Dendritic cell treated with granulocyte-macrophage colony-stimulating factor and Interleukin-4, amounts not matched to agents 40 ng/mL and 50 ng/mL, for 4 days (primary cell): ENCODE measurements at regions of chr3 and their contacts with region 1.

Region 1: DNA sequence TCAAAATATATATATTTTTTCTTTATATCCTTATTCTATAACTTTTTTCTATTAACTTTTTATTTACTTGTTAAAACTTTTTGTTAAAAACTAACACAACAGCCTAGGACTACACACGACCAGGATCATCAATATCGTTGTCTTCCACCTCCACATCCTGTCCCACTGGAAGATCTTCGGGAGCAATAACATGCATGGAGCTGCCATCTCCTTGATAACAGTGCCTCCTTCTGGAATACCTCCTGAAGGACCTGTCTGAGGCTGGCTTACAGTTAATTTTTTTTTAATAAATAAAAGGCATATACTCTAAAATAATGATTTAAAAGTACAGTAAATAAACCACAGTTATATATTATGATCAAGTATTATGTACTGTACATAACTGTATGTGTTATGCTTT is 58.9 kb downstream of the SFMBT1 start:
- H3K4me3 Mint-ChIP-seq: no peak overlapping the region
- H3K27ac Mint-ChIP-seq: no peak overlapping the region
- H3K4me1 Mint-ChIP-seq: peaks cover 30% of the 10 kb centered on the region
- H3K27me3 Mint-ChIP-seq: no peaks in the 10 kb centered on the region

Region 2: DNA sequence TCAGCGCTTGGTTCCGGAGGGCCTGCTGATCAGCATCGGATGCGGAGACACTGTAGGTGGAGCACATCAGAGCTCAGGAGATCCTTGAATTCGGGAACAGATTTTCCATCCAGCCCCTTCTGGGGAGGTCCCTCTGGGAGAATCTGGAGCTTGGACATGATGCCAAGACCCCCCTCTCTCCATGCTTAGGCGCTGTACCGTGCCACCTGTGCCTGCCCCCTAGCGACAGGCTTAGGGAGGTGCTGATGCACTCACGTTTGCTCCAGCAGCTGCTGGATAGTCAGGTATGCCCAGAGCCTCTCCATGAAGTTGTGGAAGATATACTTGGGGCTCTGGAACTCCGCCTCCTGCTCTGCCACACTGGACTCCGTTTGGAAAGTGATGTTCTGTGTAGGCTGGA is 166.2 kb before region 1 on chr3:
- intact Hi-C with region 1: no loop called
- H3K4me3 Mint-ChIP-seq: no peak overlapping the region
- H3K27ac Mint-ChIP-seq: no peak overlapping the region
- H3K4me1 Mint-ChIP-seq: no peaks in the 10 kb centered on the region
- H3K27me3 Mint-ChIP-seq: no peaks in the 10 kb centered on the region

Region 3: DNA sequence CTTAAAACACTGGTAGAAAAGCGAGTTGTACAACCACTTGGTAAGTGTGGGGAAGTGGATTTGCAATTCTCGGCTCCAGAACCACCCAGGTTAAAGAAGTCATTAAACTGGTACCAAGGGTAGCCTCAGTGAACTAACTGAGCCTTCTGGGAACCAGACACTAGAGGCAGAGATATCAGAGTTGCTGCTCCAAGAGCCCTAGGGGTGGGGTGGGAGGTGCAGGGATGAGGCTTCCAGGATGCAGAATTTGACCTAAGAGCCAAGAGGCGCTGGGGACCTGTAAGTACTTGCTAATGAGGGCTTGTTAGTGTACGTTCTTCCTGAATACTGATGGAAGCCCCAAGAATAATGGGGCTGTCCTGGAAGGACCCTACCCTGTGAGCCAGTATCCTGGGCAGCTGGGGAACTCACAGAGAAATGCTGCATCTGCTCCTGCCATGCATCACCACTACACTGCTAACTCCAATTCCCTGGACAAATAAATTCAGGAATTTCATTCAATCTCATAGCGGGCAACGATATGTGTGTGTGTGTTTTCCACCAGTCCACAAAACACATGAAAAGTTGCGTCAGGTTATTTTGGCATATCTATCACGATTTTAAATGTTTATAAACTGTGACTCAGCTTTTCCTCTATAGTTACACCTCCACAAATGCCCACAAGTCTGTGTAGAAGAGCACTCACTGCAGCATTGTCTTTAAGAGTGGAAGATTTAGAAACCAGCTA is 113.3 kb before region 1 on chr3:
- intact Hi-C with region 1: no loop called
- H3K4me3 Mint-ChIP-seq: no peak overlapping the region
- H3K27ac Mint-ChIP-seq: no peak overlapping the region
- H3K4me1 Mint-ChIP-seq: peaks cover 32% of the 10 kb centered on the region
- H3K27me3 Mint-ChIP-seq: no peaks in the 10 kb centered on the region

Region 4: GRCh38 chr3:52907497-52907896 is 79.4 kb before region 1 on chr3:
- intact Hi-C with region 1: no loop called
- H3K4me3 Mint-ChIP-seq: no peak overlapping the region
- H3K27ac Mint-ChIP-seq: no peak overlapping the region
- H3K4me1 Mint-ChIP-seq: no peaks in the 10 kb centered on the region
- H3K27me3 Mint-ChIP-seq: no peaks in the 10 kb centered on the region

Region 5: GRCh38 chr3:53005854-53006513 is 19.0 kb after region 1 on chr3:
- intact Hi-C with region 1: loop called (anchors 1 kb)
- H3K4me3 Mint-ChIP-seq: no peak overlapping the region
- H3K27ac Mint-ChIP-seq: no peak overlapping the region
- H3K4me1 Mint-ChIP-seq: peaks cover 6% of the 10 kb centered on the region
- H3K27me3 Mint-ChIP-seq: no peaks in the 10 kb centered on the region